Right ventricle myocardium inferior (tissue), 1 donor: ENCODE measurements at regions of chr1 and their contacts with region 1.

Region 1: DNA sequence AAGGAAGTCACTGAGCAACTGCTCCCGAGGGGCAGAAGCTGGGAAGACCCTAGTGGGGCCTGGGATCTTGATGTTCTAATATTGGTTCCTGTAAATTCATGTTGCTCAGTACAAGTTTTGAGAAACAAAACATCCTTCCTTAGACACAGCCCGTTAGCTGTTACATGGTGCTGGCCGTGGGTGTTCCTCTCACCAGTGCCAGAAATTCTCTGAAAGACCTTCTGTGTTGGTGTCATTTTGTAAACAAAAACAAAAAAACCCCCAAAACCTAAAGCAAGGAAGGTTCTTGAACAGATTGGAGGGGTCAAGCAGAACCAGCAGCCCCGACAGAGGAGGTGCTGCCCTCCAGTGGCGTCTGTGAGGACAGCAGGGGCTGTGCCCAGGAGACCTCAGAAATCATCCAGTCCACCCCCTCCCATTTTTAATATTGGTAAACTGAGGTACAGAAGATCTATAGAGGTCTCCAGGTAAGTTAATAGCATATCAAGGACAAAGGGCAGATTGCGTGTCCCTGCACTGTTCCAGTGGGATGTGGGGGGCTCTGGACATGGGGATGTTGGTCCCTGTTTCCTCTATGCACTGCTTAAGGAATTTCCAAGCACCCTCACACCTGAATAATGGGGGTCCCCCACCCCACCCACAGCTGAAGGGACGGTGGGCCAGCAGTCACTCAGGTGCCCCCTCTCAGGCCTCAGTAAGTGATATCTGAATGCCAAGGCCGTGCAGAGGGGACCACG is 38.2 kb downstream of the SLC2A7 start:
- DNase-seq: no peak
- ATAC-seq: peak; percentile 65

Region 2: DNA sequence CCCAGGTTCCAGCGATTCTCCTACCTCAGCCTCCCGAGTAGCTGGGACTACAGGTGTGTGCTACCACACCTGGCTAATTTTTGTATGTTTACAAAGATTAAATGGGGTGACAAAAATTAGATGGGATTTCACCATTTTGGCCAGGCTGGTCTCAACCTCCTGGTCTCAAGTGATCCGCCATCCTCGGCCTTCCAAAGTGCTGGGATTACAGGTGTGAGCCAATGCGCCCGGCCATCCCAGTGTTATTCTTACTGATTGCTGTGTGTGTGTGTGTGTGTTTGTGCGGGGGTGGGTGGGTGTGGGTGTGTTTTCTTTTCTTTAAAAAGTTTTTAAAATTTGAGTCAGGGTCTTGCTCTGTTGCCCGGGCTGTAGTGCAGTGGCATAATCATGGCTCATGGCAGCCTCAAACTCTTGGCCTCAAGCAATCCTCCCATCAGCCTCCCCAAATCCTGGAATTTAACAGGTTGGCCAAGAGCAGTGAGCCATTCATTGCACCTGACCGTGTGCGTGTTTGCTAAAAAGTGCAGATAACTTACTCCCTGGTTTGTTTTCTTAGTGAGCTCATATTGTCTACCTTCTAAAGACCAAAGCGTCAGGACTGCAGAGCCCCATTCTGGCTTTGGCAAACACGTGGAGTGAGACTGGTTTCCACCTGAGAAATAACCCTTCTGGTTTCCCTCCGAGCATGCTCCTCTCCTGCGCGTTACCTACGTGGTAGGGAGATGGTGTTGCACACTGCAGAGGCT is 74.8 kb before region 1 on chr1:
- intact Hi-C with region 1: loop called (anchors 1 kb)
- DNase-seq: no peak
- ATAC-seq: no peak

Region 3: GRCh38 chr1:8962812-8963530 is 25.1 kb before region 1 on chr1:
- intact Hi-C with region 1: loop called (anchors 2 kb)
- DNase-seq: no peak
- ATAC-seq: no peak

Region 4: DNA sequence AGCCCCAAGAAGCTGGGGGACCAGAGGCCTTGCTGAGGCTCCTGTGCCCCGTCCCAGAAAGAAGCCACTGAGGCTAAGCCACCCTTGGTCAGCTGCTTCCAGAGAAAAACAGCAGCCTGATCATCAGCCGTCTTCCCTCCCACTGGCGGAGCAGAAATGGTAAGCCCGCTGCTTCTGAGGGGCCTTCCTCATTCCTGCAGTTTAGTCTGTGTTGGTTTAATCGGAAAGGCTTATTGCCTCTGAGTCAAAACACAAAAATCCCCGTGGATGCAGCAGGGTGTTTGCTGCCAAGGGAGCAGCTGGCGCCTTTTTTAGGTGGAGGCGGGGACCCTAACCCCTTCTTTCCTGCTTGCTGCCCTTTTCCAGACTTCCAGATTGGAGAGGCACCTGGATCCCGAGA is 338.5 kb after region 1 on chr1:
- intact Hi-C with region 1: no loop called
- DNase-seq: no peak
- ATAC-seq: peak; percentile 15